Heart right ventricle (tissue), 16 donors: ENCODE measurements at regions of chr2 and their contacts with region 1.

Region 1: DNA sequence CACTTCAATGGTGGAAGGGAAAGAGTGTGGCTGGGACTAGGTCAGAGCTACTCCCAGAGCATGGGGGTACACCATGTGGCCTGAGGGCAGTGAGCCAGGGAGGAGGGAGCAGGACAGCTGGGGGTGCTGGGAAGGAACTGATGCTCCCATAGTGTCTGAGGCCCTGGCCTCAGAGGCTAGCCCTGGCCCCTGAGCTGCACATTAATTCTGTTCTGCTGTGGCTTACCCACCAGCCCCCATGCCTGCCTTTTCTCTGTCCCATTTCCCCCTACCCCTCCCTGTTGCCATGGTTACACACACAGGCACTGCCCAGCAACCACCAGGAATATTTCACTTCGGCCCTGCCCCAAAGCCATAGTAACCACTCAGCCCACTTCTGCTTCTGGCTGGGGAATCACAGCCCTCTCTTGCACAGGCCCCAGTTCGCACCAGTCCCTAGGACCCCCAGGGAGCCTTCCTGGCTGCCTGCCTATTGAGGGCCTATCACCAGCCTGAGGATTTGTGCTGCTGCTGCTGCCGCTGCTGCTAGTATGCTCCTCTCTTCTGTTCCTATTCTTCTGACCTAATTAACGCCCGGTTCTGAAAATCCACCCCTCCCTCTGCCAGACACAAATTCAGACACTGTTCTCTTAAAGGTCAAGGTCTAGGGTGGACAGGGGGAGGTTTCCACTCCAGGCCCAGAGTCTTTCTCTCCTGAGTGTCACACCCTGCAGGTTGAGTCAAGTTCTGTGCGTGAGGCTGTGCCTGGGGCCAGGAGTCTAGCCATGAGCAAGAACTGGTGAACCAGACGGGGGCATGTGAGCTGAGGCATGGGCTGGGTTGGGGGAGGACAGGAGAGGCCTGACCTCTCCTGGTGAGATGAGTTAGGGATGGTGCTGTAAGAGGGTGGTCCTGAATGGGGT is 87.1 kb upstream of the MCFD2 start:
- DNase-seq: peak in 1 of 2 donors; percentile 60
- ATAC-seq: peak; percentile 24 to 54 (median 40)
- H3K4me3 ChIP-seq: no peak overlapping the region
- H3K27ac ChIP-seq: peak overlapping the region in 9 of 10 donors; percentile 5 to 69 (median 45)
- H3K4me1 ChIP-seq: peaks cover 26 to 70% (median 36%) of the 10 kb centered on the region in 9 donors
- H3K27me3 ChIP-seq: no peaks in the 10 kb centered on the region
- CTCF ChIP-seq: no peak

Region 2: GRCh38 chr2:47043142-47043890 is 40.6 kb after region 1 on chr2:
- intact Hi-C with region 1: loop called in 1 of 10 experiments (anchors 5 kb)
- DNase-seq: peak; percentile 59 to 78
- ATAC-seq: peak; percentile 63 to 76 (median 70)
- H3K4me3 ChIP-seq: no peak overlapping the region
- H3K27ac ChIP-seq: peak overlapping the region; percentile 49 to 88 (median 80)
- H3K4me1 ChIP-seq: peaks cover 36 to 74% (median 53%) of the 10 kb centered on the region in 9 donors
- H3K27me3 ChIP-seq: no peaks in the 10 kb centered on the region
- CTCF ChIP-seq: peak in 3 of 9 donors; percentile 28 to 39 (median 32)